H1 (cell line): ENCODE measurements at regions of chr14 and their contacts with region 1.

Region 1: DNA sequence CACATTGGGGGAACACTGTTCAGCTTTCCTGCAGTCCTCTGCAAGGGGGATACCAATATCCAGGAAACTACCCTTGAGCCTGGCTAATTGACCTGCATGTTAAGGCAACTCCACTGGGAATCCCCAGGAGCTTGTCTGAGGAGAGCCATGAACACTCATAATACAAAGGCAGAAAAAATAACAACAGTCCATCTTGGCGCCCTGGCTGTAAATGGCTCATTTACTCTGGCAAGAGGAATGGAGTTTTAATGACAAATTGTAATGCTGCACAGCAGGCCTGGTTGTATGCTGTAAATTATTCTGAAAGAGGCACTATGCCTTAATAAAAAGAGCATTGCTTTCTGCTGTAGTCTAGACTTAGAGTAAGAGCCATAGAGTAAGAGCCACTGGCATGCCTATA is 58.3 kb downstream of the SLC8A3 start:
- DNase-seq: no peak
- H3K4me3 ChIP-seq: no peak overlapping the region
- H3K27ac ChIP-seq: no peak overlapping the region
- H3K4me1 ChIP-seq: peaks cover 0 to 4% (median 0%) of the 10 kb centered on the region in 4 experiments; a peak in 1 of 7 replicates
- H3K27me3 ChIP-seq: no peaks in the 10 kb centered on the region
- CTCF ChIP-seq: no peak
- EP300 ChIP-seq: no peak
- POLR2A ChIP-seq: no peak
- RAD21 ChIP-seq: no peak

Region 2: DNA sequence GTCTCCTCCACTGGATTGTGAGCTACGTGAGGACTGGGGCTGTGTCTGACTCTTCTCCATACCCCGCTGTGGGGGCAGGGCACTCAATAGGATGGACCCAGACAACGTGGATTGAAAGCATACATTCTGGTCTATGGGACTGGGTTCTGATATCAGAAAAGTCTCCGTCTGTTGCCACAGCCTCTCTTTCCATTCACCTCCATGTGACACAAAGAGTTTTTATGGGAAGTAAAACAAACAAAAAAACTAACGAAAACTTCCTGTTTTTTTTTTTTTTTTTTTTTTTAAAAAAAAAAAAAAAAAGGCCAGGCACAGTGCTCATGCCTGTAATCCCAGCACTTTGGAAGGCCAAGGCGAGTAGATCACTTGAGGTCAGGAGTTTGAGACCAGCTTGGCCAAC is 13.6 kb after region 1 on chr14:
- CTCF ChIA-PET with region 1: interaction called, 10 read pairs
- POLR2A ChIA-PET with region 1: no interaction called
- DNase-seq: no peak
- H3K4me3 ChIP-seq: no peak overlapping the region
- H3K27ac ChIP-seq: no peak overlapping the region
- H3K4me1 ChIP-seq: no peaks in the 10 kb centered on the region
- H3K27me3 ChIP-seq: no peaks in the 10 kb centered on the region
- CTCF ChIP-seq: no peak
- EP300 ChIP-seq: no peak
- POLR2A ChIP-seq: no peak
- RAD21 ChIP-seq: no peak